Heart left ventricle (tissue), 16 donors: ENCODE measurements at regions of chr7 and their contacts with region 1.

Region 1: GRCh38 chr7:108569381-108570145 is at the starts of genes DNAJB9 and THAP5:
- DNase-seq: peak; percentile 99 to 100 (median 99)
- ATAC-seq: peak; percentile 97 to 99 (median 98)
- H3K4me3 ChIP-seq: peak within 1 kb of the TSS; percentile 68 to 94 (median 78)
- H3K27ac ChIP-seq: peak within 1 kb of the TSS; percentile 92 to 99 (median 95)
- H3K4me1 ChIP-seq: peaks cover 4 to 58% (median 36%) of the 10 kb centered on the region in 12 donors
- H3K27me3 ChIP-seq: no peaks in the 10 kb centered on the region
- CTCF ChIP-seq: peak in 4 of 12 donors; percentile 12 to 39 (median 16)
- POLR2A ChIP-seq: peak; percentile 91 to 95
- total RNA-seq, gene DNAJB9: 36.8 to 78.9 (median 51.5) TPM
- total RNA-seq, gene THAP5: 22.3 to 34.4 (median 26.3) TPM

Region 2: DNA sequence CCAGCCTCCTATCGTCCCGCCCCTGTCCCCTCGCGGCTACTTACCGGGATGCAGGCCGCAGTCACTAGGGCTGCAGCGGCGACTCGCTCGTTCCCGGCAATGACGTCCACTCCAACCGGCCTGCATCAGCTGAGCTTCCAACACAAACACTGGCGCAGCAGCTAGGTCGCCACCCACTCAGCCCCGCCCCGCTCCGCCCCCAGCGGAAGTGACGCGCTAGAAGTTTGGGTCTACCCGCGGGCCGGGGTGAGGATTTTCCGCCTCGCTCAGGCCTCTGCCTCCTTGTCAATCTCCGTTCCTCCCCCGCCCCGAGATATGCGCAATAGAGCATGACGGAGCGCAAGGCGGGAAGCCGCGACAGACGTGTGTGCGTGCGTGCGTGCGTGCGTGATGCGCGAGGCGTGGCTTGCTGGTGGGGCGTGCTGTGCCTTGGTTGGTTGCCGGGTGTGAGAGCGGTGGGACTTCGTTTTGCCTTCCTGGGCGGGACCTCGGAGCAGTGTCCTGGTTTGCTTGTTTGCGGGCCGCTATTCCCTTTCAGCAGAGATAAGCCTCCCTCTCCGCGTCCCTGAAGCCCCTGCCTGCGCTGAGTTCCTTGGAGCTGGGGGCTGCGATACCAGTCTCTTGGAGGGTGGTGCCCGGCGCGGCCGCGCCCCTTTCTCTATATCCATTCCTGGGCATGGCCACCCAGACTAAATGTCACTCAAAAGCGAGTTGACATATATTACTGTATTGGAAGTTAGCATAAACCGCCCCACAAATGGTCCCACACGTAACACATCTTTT is 43.4 kb before region 1 on chr7 and contains the start of gene PNPLA8:
- intact Hi-C with region 1: loop called in 8 of 10 experiments (anchors 1 to 5 kb)
- DNase-seq: peak; percentile 100
- ATAC-seq: peak; percentile 94 to 97 (median 96)
- H3K4me3 ChIP-seq: peak within 1 kb of the TSS; percentile 39 to 89 (median 72)
- H3K27ac ChIP-seq: peak within 1 kb of the TSS; percentile 83 to 99 (median 96)
- H3K4me1 ChIP-seq: peaks cover 0 to 38% (median 26%) of the 10 kb centered on the region in 12 donors
- H3K27me3 ChIP-seq: no peaks in the 10 kb centered on the region
- CTCF ChIP-seq: peak in 1 of 12 donors; percentile 15
- POLR2A ChIP-seq: peak; percentile 51 to 78
- total RNA-seq, gene PNPLA8: 26.1 to 50.9 (median 32.8) TPM